Lower lobe of right lung (tissue), 2 donors: ENCODE measurements at regions of chr1 and their contacts with region 1.

Region 1: GRCh38 chr1:203504397-203505250 is 10.7 kb downstream of the OPTC start:
- DNase-seq: peak; percentile 82
- ATAC-seq: peak; percentile 81 to 86
- H3K4me3 ChIP-seq: no peak overlapping the region
- H3K27ac ChIP-seq: no peak overlapping the region
- H3K4me1 ChIP-seq: peaks cover 22% of the 10 kb centered on the region
- H3K27me3 ChIP-seq: no peaks in the 10 kb centered on the region
- CTCF ChIP-seq: peak; percentile 87

Region 2: DNA sequence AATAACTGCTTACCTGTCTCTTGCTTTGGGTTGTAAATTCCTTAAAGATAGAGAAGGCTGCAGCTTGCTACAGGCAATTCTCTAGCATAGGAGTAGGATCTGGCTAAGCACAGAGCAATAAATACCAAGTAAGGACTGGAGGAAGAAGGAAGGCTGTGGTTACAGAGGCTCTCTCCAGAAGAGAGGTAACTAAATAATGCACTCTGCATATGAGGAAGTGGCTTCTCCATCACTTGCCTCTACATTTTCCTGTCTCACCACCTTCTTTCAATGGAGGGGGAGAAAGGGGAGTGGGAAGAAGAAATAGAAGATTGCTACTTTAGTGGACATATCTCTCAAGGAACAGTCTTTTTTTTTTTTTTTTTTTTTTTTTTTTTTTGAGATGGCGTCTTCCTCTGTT is 199.5 kb after region 1 on chr1:
- intact Hi-C with region 1: loop called (anchors 2 kb)
- DNase-seq: no peak
- ATAC-seq: no peak
- H3K4me3 ChIP-seq: no peak overlapping the region
- H3K27ac ChIP-seq: no peak overlapping the region
- H3K4me1 ChIP-seq: no peaks in the 10 kb centered on the region
- H3K27me3 ChIP-seq: no peaks in the 10 kb centered on the region
- CTCF ChIP-seq: no peak